Cardiac septum (tissue), 1 donor: ENCODE measurements at regions of chr10 and their contacts with region 1.

Region 1: GRCh38 chr10:69506834-69507721 is 55.8 kb downstream of the TSPAN15 start:
- DNase-seq: no peak

Region 2: GRCh38 chr10:69237528-69238159 is 269.4 kb before region 1 on chr10:
- intact Hi-C with region 1: loop called (anchors 10 kb)
- DNase-seq: peak; percentile 94

Region 3: GRCh38 chr10:69408318-69409175 is 98.5 kb before region 1 on chr10:
- intact Hi-C with region 1: loop called (anchors 5 kb)
- DNase-seq: peak; percentile 97

Region 4: GRCh38 chr10:69425511-69426298 is 81.4 kb before region 1 on chr10:
- intact Hi-C with region 1: loop called (anchors 1 kb)
- DNase-seq: no peak

Region 5: DNA sequence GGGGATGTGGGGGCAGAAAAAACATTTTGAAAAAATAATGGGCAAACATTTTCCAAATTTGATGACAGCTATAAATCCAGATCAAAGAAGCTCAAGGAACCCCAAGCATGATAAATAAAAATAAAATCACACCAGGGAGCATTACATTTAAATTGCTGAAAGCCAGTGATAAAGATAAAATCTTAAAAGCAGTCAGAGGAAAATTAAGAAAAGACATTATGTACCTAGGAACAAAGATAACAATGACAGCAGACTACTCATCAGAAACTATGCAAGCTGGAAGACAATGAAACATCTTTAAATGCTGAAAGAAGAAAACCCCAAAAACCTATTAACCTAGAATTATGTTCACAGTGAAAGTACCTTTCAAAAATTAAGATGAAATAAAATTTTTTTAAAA is 42.9 kb after region 1 on chr10:
- intact Hi-C with region 1: no loop called
- DNase-seq: no peak